Esophagus squamous epithelium (tissue), 5 donors: ENCODE measurements at regions of chr4 and their contacts with region 1.

Region 1: GRCh38 chr4:101347557-101348366 is 436 bp upstream of the PPP3CA start:
- DNase-seq: peak; percentile 95
- H3K4me3 ChIP-seq: peak overlapping the region; percentile 86 to 94 (median 90)
- H3K27ac ChIP-seq: peak overlapping the region; percentile 96 to 99 (median 98)
- H3K4me1 ChIP-seq: peaks cover 13 to 55% (median 23%) of the 10 kb centered on the region in 3 donors
- H3K27me3 ChIP-seq: no peaks in the 10 kb centered on the region
- CTCF ChIP-seq: peak in 1 of 6 experiments; percentile 16
- POLR2A ChIP-seq: peak in 3 of 4 donors; percentile 40 to 85 (median 58)

Region 2: GRCh38 chr4:101187841-101188240 is 159.9 kb before region 1 on chr4:
- intact Hi-C with region 1: loop called (anchors 10 kb)
- DNase-seq: no peak
- H3K4me3 ChIP-seq: no peak overlapping the region
- H3K27ac ChIP-seq: no peak overlapping the region
- H3K4me1 ChIP-seq: peaks cover 0 to 40% (median 11%) of the 10 kb centered on the region in 3 donors
- H3K27me3 ChIP-seq: no peaks in the 10 kb centered on the region
- CTCF ChIP-seq: peak in 4 of 6 experiments; percentile 26 to 56 (median 30)
- POLR2A ChIP-seq: no peak

Region 3: GRCh38 chr4:101328063-101328602 is 19.6 kb before region 1 on chr4:
- intact Hi-C with region 1: no loop called
- DNase-seq: no peak
- H3K4me3 ChIP-seq: no peak overlapping the region
- H3K27ac ChIP-seq: no peak overlapping the region
- H3K4me1 ChIP-seq: peaks cover 0 to 23% (median 9%) of the 10 kb centered on the region in 3 donors
- H3K27me3 ChIP-seq: no peaks in the 10 kb centered on the region
- CTCF ChIP-seq: no peak
- POLR2A ChIP-seq: no peak